Heart left ventricle (tissue), 16 donors: ENCODE measurements at regions of chr2 and their contacts with region 1.

Region 1: GRCh38 chr2:169462896-169463695 is 16.2 kb upstream of the BBS5 start:
- DNase-seq: no peak
- ATAC-seq: peak in 2 of 4 donors; percentile 39 to 61
- H3K4me3 ChIP-seq: no peak overlapping the region
- H3K27ac ChIP-seq: no peak overlapping the region
- H3K4me1 ChIP-seq: peaks cover 0 to 6% (median 0%) of the 10 kb centered on the region in 12 donors
- H3K27me3 ChIP-seq: no peaks in the 10 kb centered on the region
- CTCF ChIP-seq: no peak
- POLR2A ChIP-seq: no peak

Region 2: GRCh38 chr2:167972020-167972419 is 1491.1 kb before region 1 on chr2:
- intact Hi-C with region 1: loop called in 1 of 10 experiments (anchors 10 kb)
- DNase-seq: no peak
- ATAC-seq: no peak
- H3K4me3 ChIP-seq: no peak overlapping the region
- H3K27ac ChIP-seq: no peak overlapping the region
- H3K4me1 ChIP-seq: peaks cover 0 to 6% (median 0%) of the 10 kb centered on the region in 12 donors
- H3K27me3 ChIP-seq: no peaks in the 10 kb centered on the region
- CTCF ChIP-seq: no peak
- POLR2A ChIP-seq: no peak